ENCODE measurements at regions of chr1 and their contacts with region 1.

Region 1: DNA sequence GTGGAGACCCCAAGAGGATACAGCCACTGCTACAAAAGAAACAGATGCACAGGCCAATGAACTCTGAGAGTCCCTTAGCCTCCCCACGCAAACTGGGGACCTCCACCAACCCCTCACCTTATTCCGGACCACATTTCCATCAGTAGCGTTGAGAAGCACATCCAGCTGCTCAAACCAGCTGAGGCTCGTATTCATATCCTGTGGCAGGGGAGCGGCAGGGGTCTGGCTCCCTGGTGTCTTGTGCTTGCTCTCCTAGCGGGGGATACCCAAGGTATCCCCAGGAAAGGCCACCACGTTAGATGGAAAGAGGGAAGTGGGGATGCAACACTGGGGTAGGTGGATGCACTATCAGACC is 481 bp downstream of the CCDC163 start:
- DNase-seq: peak in 1 of 14 experiments; percentile 23
- ATAC-seq: no peak
- H3K4me3 ChIP-seq: peak overlapping the region; percentile 80
- H3K4me3 Mint-ChIP-seq: peak overlapping the region; percentile 96
- H3K27ac ChIP-seq: peak overlapping the region; percentile 0 to 53
- H3K27ac Mint-ChIP-seq: peak overlapping the region; percentile 83
- H3K4me1 ChIP-seq: peaks cover 24% of the 10 kb centered on the region
- H3K4me1 Mint-ChIP-seq: peaks cover 36% of the 10 kb centered on the region
- H3K27me3 ChIP-seq: no peaks in the 10 kb centered on the region
- H3K27me3 Mint-ChIP-seq: no peaks in the 10 kb centered on the region
- CTCF ChIP-seq: no peak

Region 2: GRCh38 chr1:44721485-44722361 is 777.7 kb before region 1 on chr1:
- CTCF ChIA-PET with region 1: no interaction called
- POLR2A ChIA-PET with region 1: interaction called, 15 read pairs
- intact Hi-C with region 1: loop called (anchors 5 kb)
- DNase-seq: peak; percentile 16 to 93 (median 48)
- ATAC-seq: peak; percentile 75
- H3K4me3 ChIP-seq: peak overlapping the region; percentile 6
- H3K4me3 Mint-ChIP-seq: peak overlapping the region; percentile 84
- H3K27ac ChIP-seq: peak overlapping the region; percentile 30 to 76
- H3K27ac Mint-ChIP-seq: peak overlapping the region; percentile 90
- H3K4me1 ChIP-seq: peaks cover 77% of the 10 kb centered on the region
- H3K4me1 Mint-ChIP-seq: peaks cover 68% of the 10 kb centered on the region
- H3K27me3 ChIP-seq: no peaks in the 10 kb centered on the region
- H3K27me3 Mint-ChIP-seq: no peaks in the 10 kb centered on the region
- CTCF ChIP-seq: no peak

Region 3: DNA sequence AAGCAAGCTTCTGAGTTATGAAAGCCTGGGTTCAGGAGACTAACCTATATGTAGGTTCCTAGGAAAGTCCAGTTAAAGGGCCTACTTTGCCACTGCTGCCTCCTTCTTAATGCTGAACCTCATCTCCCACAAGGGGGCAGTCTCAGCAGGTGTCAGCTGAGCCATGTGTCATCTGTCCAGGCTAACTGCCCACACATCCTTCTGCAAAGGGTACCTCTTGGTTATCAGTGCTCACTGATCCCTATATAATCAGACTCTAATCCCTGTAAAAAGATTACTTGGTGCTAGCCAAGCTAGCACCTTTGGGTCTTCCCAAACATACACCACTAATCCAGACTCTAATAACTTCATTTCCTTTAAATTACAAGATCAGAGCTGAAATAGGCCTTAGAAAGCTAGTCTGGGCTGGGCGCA is 13.3 kb after region 1 on chr1:
- CTCF ChIA-PET with region 1: interaction called, 11 read pairs
- POLR2A ChIA-PET with region 1: interaction called, 6 read pairs
- intact Hi-C with region 1: no loop called
- DNase-seq: peak; percentile 25 to 80 (median 40)
- ATAC-seq: peak; percentile 41
- H3K4me3 ChIP-seq: no peak overlapping the region
- H3K4me3 Mint-ChIP-seq: no peak overlapping the region
- H3K27ac ChIP-seq: no peak overlapping the region
- H3K27ac Mint-ChIP-seq: peak overlapping the region; percentile 69
- H3K4me1 ChIP-seq: no peaks in the 10 kb centered on the region
- H3K4me1 Mint-ChIP-seq: peaks cover 8% of the 10 kb centered on the region
- H3K27me3 ChIP-seq: no peaks in the 10 kb centered on the region
- H3K27me3 Mint-ChIP-seq: no peaks in the 10 kb centered on the region
- CTCF ChIP-seq: peak; percentile 68

Region 4: DNA sequence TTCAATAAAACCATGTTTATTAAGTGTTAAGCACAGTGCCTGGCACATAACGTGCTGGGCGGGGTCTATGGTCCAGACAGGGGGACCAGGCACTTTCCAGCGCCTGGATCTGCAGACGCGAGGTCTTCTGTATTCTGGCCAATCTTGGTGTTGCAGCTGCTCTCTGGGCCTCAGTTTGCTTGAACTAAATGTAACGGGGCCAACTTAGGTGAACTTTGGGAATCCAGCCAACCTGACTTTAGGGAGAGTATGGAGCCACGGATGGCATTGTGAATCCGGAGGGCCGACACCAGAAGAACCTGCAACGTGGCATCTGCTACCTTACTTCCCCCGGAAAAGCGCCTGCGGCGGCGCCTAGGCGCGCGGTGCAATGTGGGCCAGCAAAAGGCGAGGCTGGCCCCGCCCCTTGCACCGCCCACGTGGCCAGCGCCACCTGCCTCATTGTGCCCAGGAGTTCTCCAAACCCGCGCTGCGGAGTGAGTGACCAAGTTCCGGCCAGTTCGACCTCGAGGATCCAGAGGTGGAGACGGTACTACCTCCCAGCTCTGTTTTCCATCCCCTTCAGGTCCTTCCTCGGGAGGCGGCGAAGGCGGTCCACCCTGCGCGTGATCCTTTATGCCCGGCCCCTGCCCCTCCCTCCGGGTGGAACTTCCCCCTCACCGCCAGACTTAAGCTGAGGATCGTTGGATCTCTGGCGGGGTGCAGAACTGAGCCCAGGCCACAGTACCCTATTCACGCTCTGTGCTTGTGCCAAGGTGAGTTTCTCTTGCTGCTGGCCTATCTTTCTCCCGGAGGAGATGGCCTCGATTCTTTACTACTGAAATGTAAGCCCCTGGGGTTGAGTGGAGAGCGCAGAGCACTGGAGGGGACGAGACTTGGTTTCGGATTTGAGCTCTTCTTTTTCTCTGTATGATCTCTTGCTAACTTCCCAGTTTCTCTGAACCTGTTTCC is 51.3 kb after region 1 on chr1 and contains the start of gene AKR1A1:
- CTCF ChIA-PET with region 1: interaction called, 4 read pairs
- POLR2A ChIA-PET with region 1: interaction called, 12 read pairs
- intact Hi-C with region 1: no loop called
- DNase-seq: peak; percentile 70 to 94 (median 84)
- ATAC-seq: peak; percentile 95
- H3K4me3 ChIP-seq: peak within 1 kb of the TSS; percentile 73
- H3K4me3 Mint-ChIP-seq: peak within 1 kb of the TSS; percentile 98
- H3K27ac ChIP-seq: peak within 1 kb of the TSS; percentile 85 to 90
- H3K27ac Mint-ChIP-seq: peak within 1 kb of the TSS; percentile 89
- H3K4me1 ChIP-seq: peaks cover 27% of the 10 kb centered on the region
- H3K4me1 Mint-ChIP-seq: peaks cover 26% of the 10 kb centered on the region
- H3K27me3 ChIP-seq: no peaks in the 10 kb centered on the region
- H3K27me3 Mint-ChIP-seq: no peaks in the 10 kb centered on the region
- CTCF ChIP-seq: no peak
- total RNA-seq, gene AKR1A1: 25.3 to 31.0 TPM

Region 5: DNA sequence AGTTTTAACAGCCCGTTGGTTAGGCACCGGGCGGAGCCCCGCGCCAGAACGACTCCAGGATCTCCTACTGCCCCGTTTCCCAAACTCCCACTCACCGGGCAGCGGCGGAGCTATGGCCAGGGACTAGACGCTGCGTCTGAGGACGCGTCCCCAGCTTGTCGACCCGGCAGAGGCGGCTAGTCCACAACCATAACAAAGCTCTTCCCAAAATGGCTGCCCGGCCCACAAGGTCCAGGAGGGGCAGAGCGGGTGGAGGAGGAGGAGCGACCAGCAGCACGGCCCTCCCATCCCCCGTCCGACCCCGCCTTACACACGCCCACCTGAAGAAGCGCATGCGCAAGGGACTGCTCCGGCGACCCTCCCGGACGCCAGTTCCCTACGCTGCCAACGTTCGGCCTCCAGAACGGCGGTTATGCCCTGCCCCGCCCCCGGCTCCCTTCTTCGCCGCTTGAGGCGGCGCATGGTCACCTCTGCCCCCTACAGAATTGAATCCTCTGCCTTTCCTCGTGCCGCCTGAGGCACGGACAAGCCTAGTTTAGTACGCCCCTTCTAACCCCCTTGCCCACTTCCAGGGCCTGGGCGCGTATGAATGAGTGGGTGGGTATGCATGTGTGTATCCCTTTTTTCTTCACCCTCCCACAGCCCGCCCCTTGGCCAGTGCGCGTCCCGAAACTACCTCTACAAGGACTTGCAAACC is 187.1 kb after region 1 on chr1 and contains the start of gene GPBP1L1:
- CTCF ChIA-PET with region 1: no interaction called
- POLR2A ChIA-PET with region 1: interaction called, 12 read pairs
- intact Hi-C with region 1: loop called (anchors 2 to 5 kb)
- DNase-seq: peak; percentile 96 to 99 (median 98)
- ATAC-seq: peak; percentile 68
- H3K4me3 ChIP-seq: peak within 1 kb of the TSS; percentile 95
- H3K4me3 Mint-ChIP-seq: peak within 1 kb of the TSS; percentile 99
- H3K27ac ChIP-seq: peak within 1 kb of the TSS; percentile 97
- H3K27ac Mint-ChIP-seq: peak within 1 kb of the TSS; percentile 100
- H3K4me1 ChIP-seq: peaks cover 44% of the 10 kb centered on the region
- H3K4me1 Mint-ChIP-seq: peaks cover 51% of the 10 kb centered on the region
- H3K27me3 ChIP-seq: no peaks in the 10 kb centered on the region
- H3K27me3 Mint-ChIP-seq: no peaks in the 10 kb centered on the region
- CTCF ChIP-seq: no peak
- total RNA-seq, gene GPBP1L1: 116 to 125 TPM